Activated CD4-positive, alpha-beta T cell treated with anti-CD3 and anti-CD28 coated beads for 36 hours (primary cell): ENCODE measurements at regions of chr1 and their contacts with region 1.

Region 1: GRCh38 chr1:37931361-37932158 is 15.3 kb downstream of the INPP5B start:
- DNase-seq: peak; percentile 98
- ATAC-seq: peak; percentile 98
- H3K4me3 Mint-ChIP-seq: peak overlapping the region; percentile 86
- H3K27ac Mint-ChIP-seq: peak overlapping the region; percentile 80
- H3K4me1 Mint-ChIP-seq: peaks cover 33% of the 10 kb centered on the region
- H3K27me3 Mint-ChIP-seq: no peaks in the 10 kb centered on the region

Region 2: GRCh38 chr1:37807555-37808368 is 123.8 kb before region 1 on chr1 and contains the starts of genes C1orf122 and YRDC:
- CTCF ChIA-PET with region 1: no interaction called
- POLR2A ChIA-PET with region 1: no interaction called
- intact Hi-C with region 1: loop called in 1 of 2 experiments (anchors 1 kb)
- DNase-seq: peak; percentile 95
- ATAC-seq: peak; percentile 92
- H3K4me3 Mint-ChIP-seq: peak within 1 kb of the TSS; percentile 90
- H3K27ac Mint-ChIP-seq: peak within 1 kb of the TSS; percentile 93
- H3K4me1 Mint-ChIP-seq: peaks cover 34% of the 10 kb centered on the region
- H3K27me3 Mint-ChIP-seq: no peaks in the 10 kb centered on the region
- total RNA-seq, gene C1orf122: 10.8 to 17.9 TPM
- total RNA-seq, gene YRDC: 22.9 to 36.3 TPM

Region 3: GRCh38 chr1:37890378-37891014 is 41.1 kb before region 1 on chr1:
- CTCF ChIA-PET with region 1: interaction called, 3 read pairs
- POLR2A ChIA-PET with region 1: no interaction called
- intact Hi-C with region 1: loop called in 1 of 2 experiments (anchors 2 kb)
- DNase-seq: no peak
- ATAC-seq: no peak
- H3K4me3 Mint-ChIP-seq: no peak overlapping the region
- H3K27ac Mint-ChIP-seq: no peak overlapping the region
- H3K4me1 Mint-ChIP-seq: no peaks in the 10 kb centered on the region
- H3K27me3 Mint-ChIP-seq: no peaks in the 10 kb centered on the region

Region 4: GRCh38 chr1:37989361-37989930 is 57.9 kb after region 1 on chr1:
- CTCF ChIA-PET with region 1: interaction called, 5 read pairs
- POLR2A ChIA-PET with region 1: no interaction called
- intact Hi-C with region 1: loop called in 1 of 2 experiments (anchors 1 kb)
- DNase-seq: peak; percentile 67
- ATAC-seq: peak; percentile 31
- H3K4me3 Mint-ChIP-seq: peak overlapping the region; percentile 93
- H3K27ac Mint-ChIP-seq: peak overlapping the region; percentile 90
- H3K4me1 Mint-ChIP-seq: peaks cover 20% of the 10 kb centered on the region
- H3K27me3 Mint-ChIP-seq: no peaks in the 10 kb centered on the region

Region 5: GRCh38 chr1:38559161-38559824 is 627.7 kb after region 1 on chr1:
- CTCF ChIA-PET with region 1: no interaction called
- POLR2A ChIA-PET with region 1: no interaction called
- intact Hi-C with region 1: loop called in 1 of 2 experiments (anchors 5 kb)
- DNase-seq: peak; percentile 91
- ATAC-seq: peak; percentile 91
- H3K4me3 Mint-ChIP-seq: peak overlapping the region; percentile 56
- H3K27ac Mint-ChIP-seq: peak overlapping the region; percentile 77
- H3K4me1 Mint-ChIP-seq: peaks cover 49% of the 10 kb centered on the region
- H3K27me3 Mint-ChIP-seq: peaks cover 23% of the 10 kb centered on the region